ENCODE measurements at regions of chr2 and their contacts with region 1.

Region 1: DNA sequence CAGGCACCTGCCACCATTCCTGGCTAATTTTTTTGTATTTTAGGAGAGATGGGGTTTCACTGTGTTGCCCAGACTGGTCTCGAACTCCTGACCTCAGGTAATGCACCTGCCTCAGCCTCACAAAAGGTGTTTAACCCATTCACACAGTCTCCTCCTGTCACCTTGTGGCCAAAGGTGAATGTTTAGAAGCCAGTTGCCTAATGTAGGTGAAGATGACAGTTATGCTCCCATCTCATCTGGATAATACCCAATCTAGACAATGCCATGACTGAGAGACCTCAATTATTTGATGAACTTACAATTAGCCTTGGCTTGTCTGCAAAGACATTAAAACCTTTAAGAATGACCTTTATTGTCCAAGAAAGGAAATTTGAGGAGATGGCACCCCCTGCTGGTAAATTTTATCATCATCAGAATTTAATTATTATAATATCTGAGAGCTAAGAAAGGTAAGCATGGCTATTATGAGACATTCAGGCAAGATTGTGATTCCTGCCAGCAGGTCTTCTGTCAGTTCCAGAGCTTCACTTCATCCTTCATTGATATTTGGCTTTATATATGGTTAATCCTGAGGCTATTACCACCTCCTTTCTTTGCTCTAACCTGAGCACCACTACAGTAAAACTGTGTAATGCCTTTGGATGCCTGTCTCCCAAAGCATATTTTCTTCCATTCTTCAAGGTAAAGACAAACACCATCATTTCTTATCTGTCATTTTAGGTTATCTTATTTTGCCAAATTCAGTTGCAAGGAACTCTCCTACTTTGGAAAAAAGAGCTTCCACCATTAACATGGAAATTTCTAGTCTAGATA is 117.6 kb downstream of the FAM124B start:
- DNase-seq: peak; percentile 73
- ATAC-seq: peak; percentile 77
- H3K4me3 ChIP-seq: no peak overlapping the region
- H3K27ac ChIP-seq: no peak overlapping the region
- H3K4me1 ChIP-seq: no peaks in the 10 kb centered on the region
- H3K27me3 ChIP-seq: no peaks in the 10 kb centered on the region
- CTCF ChIP-seq: peak; percentile 93; the same call in 1 of the 2 replicates

Region 2: DNA sequence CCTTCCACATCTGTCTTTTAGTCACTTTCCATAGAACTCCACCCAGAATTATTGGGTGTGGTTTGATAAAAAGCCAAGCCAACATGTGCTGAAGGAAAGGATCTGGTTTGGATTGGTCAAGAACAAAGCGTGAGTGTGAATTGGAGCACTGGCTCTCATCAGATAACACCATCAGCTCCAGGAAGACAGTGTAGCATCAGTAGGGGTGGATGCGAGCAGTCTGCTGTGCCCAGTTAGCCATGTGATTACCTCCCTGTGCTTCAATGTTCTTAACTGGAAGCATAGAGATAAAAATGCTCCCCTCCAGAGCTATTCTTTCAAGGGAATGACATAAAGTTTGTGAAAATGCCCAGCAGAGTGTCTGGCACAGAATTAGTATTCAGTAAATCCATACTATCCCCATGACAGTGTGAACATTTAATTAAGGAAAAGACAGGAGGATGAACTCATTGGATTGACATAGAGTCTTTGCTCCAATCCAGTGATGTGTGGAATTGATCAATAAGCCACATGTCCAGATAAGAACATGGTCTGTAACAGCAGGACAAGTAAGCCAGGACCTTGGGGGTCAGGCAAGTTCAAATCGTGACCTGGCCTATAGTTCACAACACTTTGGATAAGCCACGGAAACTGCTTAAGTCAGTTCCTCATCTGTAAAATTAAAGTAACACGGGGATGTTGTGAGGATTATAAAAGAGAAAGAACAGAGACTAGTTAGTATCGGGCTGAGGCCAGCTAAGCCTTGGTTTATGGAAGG is 49.6 kb after region 1 on chr2:
- CTCF ChIA-PET with region 1: no interaction called
- POLR2A ChIA-PET with region 1: no interaction called
- intact Hi-C with region 1: no loop called
- DNase-seq: no peak
- ATAC-seq: no peak
- H3K4me3 ChIP-seq: no peak overlapping the region
- H3K27ac ChIP-seq: no peak overlapping the region
- H3K4me1 ChIP-seq: no peaks in the 10 kb centered on the region
- H3K27me3 ChIP-seq: no peaks in the 10 kb centered on the region
- CTCF ChIP-seq: no peak

Region 3: DNA sequence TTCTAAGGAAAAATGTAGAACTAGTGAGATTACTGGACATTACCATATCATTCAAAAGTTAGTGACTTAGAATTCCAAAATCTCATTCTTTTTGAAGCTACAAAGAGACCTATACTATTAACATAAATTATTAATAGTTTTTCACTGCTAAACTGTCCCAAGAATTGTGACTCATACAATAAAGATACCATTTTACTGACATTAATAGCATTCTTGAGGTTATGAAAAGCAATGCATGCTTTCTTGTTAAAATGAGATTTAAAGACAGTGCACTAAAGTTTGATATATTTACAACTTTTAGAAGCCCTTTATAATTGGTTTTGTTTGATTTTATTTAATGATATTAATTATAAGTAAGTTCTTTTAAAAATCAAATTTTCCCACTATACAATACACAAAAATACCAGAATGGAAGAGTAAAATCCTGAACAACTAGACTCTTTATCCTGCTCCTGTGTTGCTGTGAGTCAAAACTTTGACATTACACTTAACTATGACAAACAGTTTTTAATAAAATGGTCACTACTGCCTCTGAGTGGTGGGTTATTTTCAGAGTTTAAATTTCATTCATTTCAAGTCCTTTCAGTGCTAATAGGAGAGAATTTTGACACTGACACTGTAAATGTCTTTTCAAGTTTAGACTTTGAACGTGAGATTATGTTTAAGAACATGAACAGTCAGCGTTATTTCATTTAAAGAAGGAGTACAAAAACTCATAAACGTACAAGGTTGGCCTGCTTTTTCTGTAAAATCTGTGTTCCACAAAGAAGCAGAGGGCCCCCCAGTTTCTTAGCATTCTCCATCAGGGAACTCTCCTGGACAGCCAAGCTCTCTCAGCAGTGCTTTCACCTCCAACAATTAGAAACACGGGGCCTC is 63.1 kb after region 1 on chr2:
- CTCF ChIA-PET with region 1: no interaction called
- POLR2A ChIA-PET with region 1: no interaction called
- intact Hi-C with region 1: loop called (anchors 5 kb)
- DNase-seq: peak; percentile 28
- ATAC-seq: peak; percentile 85
- H3K4me3 ChIP-seq: no peak overlapping the region
- H3K27ac ChIP-seq: no peak overlapping the region
- H3K4me1 ChIP-seq: no peaks in the 10 kb centered on the region; the same call in 1 of the 2 replicates
- H3K27me3 ChIP-seq: no peaks in the 10 kb centered on the region
- CTCF ChIP-seq: peak; percentile 27

Measured in PC-3 (cell line).